ENCODE measurements at regions of chr1 and their contacts with region 1.

Region 1: GRCh38 chr1:117895482-117896114 is 33.8 kb downstream of the GDAP2 start:
- DNase-seq: no peak
- ATAC-seq: peak; percentile 41

Region 2: GRCh38 chr1:117512743-117513321 is 382.8 kb before region 1 on chr1:
- intact Hi-C with region 1: loop called (anchors 5 kb)
- DNase-seq: no peak
- ATAC-seq: no peak